Activated CD8-positive, alpha-beta memory T cell treated with anti-CD3 and anti-CD28 coated beads, Interleukin-2, amount 10 ng/mL, durations not matched to agents 7 days and 5 days (primary cell): ENCODE measurements at regions of chr5 and their contacts with region 1.

Region 1: GRCh38 chr5:176660860-176661641 is 13.8 kb downstream of the TSPAN17 start:
- DNase-seq: peak; percentile 82
- ATAC-seq: peak; percentile 77
- H3K4me3 Mint-ChIP-seq: no peak overlapping the region
- H3K27ac Mint-ChIP-seq: no peak overlapping the region
- H3K4me1 Mint-ChIP-seq: peaks cover 29% of the 10 kb centered on the region
- H3K27me3 Mint-ChIP-seq: peaks cover 13% of the 10 kb centered on the region

Region 2: GRCh38 chr5:176647030-176647866 is 13.8 kb before region 1 on chr5 and contains the start of gene TSPAN17:
- CTCF ChIA-PET with region 1: interaction called, 124 read pairs
- DNase-seq: peak; percentile 100
- ATAC-seq: peak; percentile 96
- H3K4me3 Mint-ChIP-seq: peak within 1 kb of the TSS; percentile 86
- H3K27ac Mint-ChIP-seq: peak within 1 kb of the TSS; percentile 87
- H3K4me1 Mint-ChIP-seq: peaks cover 40% of the 10 kb centered on the region
- H3K27me3 Mint-ChIP-seq: no peaks in the 10 kb centered on the region
- total RNA-seq, gene TSPAN17: 31.5 to 39.2 TPM

Region 3: DNA sequence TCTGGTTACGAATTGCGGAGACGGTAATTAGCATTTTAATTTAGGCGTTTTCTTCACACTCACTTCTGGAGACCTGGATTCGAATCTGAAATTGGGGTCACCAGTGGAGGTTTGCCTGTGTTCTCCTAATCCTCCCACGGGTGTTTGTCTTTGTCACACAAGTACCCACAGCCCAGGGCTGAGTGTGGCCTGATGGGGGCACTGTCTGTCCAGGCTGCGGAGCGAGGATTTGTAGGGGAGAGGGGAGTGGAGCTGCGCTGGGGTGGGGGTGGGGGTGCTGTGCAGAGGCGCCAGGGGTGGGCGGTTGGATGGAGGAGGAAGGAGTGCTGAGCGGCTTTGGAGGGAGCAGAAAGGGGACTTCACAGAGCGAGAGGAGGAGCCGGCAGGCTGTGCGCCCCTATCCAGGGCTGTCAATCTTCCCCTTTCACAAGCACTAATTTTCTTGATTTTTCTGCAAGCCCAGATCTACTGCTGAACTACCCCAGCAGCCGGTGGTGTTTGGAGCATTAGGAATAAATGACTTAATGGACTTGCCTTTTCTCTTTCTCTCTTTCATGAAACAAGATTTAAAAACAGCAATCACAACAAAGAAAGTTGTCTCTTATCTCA is 39.3 kb after region 1 on chr5:
- CTCF ChIA-PET with region 1: interaction called, 18 read pairs
- DNase-seq: no peak
- ATAC-seq: no peak
- H3K4me3 Mint-ChIP-seq: no peak overlapping the region
- H3K27ac Mint-ChIP-seq: no peak overlapping the region
- H3K4me1 Mint-ChIP-seq: no peaks in the 10 kb centered on the region
- H3K27me3 Mint-ChIP-seq: peaks cover 47% of the 10 kb centered on the region

Region 4: GRCh38 chr5:176959051-176959450 is 298.0 kb after region 1 on chr5:
- CTCF ChIA-PET with region 1: interaction called, 27 read pairs
- DNase-seq: no peak
- ATAC-seq: peak; percentile 65
- H3K4me3 Mint-ChIP-seq: no peak overlapping the region
- H3K27ac Mint-ChIP-seq: no peak overlapping the region
- H3K4me1 Mint-ChIP-seq: no peaks in the 10 kb centered on the region
- H3K27me3 Mint-ChIP-seq: no peaks in the 10 kb centered on the region

Region 5: DNA sequence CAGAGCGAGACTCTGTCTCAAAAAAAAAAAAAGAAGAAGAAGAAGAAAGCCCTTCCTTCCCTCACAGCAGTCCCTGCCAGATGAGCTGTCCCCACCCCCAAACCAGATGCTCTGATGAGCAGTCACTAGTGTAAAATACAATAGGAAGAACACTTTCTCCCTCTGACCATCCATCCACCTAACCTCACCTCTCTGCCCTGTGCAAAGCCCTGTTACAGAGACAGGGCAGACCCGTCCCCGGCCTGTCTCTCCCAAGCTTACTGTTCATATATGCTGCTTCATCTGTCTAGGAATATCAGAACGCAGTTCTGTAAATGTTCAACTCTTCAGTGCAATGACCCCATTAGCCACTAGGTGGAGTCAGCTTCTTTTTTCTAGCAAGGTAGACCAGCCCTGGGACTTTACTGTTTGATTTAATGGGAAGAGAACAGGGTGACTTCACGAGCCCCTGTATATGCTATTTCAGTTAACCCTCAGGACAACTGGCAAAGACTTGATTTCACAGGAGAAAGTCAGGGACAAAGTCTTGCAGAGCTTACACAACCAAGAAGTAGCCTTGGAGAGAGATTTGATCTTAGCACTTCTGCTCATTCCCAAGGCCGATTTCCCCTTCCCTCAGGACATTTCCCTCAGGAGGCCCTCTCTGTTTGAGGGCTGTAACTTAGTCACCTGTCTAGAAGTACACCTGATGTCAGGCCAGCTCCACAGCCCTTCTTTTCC is 410.8 kb after region 1 on chr5:
- CTCF ChIA-PET with region 1: interaction called, 15 read pairs
- DNase-seq: peak; percentile 76
- ATAC-seq: peak; percentile 79
- H3K4me3 Mint-ChIP-seq: no peak overlapping the region
- H3K27ac Mint-ChIP-seq: peak overlapping the region; percentile 34
- H3K4me1 Mint-ChIP-seq: peaks cover 11% of the 10 kb centered on the region
- H3K27me3 Mint-ChIP-seq: no peaks in the 10 kb centered on the region